Panc1 (cell line): ENCODE measurements at regions of chr14 and their contacts with region 1.

Region 1: DNA sequence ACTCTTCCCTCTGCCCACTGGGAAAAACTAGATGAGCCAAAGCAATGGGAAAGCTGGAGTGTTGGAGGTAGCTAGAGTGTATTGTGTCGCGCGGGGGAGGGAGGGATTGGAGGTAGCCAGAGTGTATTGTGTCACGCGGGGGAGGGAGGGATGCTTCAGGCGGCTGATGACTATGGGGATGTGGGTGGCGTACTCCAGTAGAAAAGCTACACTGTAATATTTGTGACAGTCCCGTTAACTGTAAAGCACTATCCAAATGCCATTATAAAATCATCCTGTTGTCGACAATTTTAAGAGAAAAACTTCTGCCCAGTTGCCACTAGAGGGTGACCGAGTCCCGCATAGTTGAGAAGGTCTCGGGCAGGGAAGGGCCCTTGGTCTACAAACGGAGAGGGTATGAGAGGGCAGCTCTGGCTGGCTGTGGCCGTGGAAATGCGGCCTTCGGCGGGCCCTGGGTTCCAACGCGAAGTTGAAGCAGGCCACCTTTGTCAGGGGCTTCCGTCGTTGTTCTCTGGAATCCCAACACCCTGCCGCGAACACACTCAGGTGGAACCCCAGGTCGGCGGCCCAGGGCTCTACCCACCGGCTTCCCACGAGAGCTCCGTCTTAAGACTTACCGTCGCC is 15.1 kb upstream of the PLEK2 start:
- DNase-seq: peak; percentile 36
- ATAC-seq: peak; percentile 88
- H3K4me3 ChIP-seq: no peak overlapping the region
- H3K27ac ChIP-seq: peak overlapping the region; percentile 54; the same call in 1 of the 2 replicates
- H3K4me1 ChIP-seq: peaks cover 7% of the 10 kb centered on the region
- H3K27me3 ChIP-seq: no peaks in the 10 kb centered on the region
- CTCF ChIP-seq: peak; percentile 84

Region 2: DNA sequence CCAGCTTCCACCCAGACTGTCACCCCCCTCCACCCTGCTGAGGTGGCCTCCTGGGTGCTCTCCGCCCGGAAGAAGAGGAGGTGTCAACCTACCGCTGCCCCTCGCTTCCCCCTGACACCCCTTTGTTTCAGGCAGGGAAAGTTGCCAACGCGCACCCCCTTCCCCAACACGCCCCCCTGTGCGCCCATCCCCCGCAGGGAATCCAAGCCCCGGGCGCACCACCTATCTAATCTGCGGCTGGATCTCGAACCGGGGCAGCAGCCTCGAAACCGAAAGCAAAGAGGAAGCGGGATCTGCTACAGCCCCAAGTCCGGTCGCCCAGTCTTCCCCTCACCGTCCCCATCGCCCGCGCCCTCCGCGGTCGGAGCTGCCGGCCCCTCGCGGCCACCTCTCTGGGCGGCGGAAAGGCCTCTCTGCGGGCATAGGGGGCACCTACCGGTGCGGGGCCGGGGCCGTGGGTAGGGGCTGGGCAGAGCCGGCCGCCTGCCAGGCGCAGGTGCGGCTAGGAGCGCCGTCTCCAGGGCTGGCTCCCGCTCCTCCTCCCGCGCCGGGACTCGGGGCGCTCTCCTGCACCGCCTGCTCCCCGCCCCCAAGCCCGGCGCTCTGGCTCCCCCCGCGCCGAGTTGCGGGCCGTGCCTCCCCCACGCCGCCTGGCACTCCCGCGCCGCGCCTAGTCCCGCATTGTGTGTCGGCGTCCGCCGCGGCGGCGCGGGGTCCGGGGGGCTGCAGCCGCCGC is 87.7 kb after region 1 on chr14:
- CTCF ChIA-PET with region 1: interaction called, 17 read pairs
- POLR2A ChIA-PET with region 1: no interaction called
- in situ Hi-C with region 1: no loop called
- intact Hi-C with region 1: loop called (anchors 10 kb)
- DNase-seq: no peak
- ATAC-seq: peak; percentile 60
- H3K4me3 ChIP-seq: peak overlapping the region; percentile 53 to 57
- H3K27ac ChIP-seq: no peak overlapping the region
- H3K4me1 ChIP-seq: peaks cover 14% of the 10 kb centered on the region; the same call in 1 of the 2 replicates
- H3K27me3 ChIP-seq: no peaks in the 10 kb centered on the region; the same call in 1 of the 2 replicates
- CTCF ChIP-seq: no peak

Region 3: GRCh38 chr14:67526676-67527459 is 99.8 kb after region 1 on chr14:
- CTCF ChIA-PET with region 1: interaction called, 28 read pairs
- POLR2A ChIA-PET with region 1: no interaction called
- in situ Hi-C with region 1: no loop called
- intact Hi-C with region 1: no loop called
- DNase-seq: peak; percentile 32
- ATAC-seq: peak; percentile 93
- H3K4me3 ChIP-seq: no peak overlapping the region
- H3K27ac ChIP-seq: no peak overlapping the region
- H3K4me1 ChIP-seq: no peaks in the 10 kb centered on the region
- H3K27me3 ChIP-seq: peaks cover 4% of the 10 kb centered on the region; the same call in 1 of the 2 replicates
- CTCF ChIP-seq: peak; percentile 89

Region 4: GRCh38 chr14:67571272-67571850 is 144.3 kb after region 1 on chr14:
- CTCF ChIA-PET with region 1: interaction called, 22 read pairs
- POLR2A ChIA-PET with region 1: no interaction called
- in situ Hi-C with region 1: no loop called
- intact Hi-C with region 1: loop called (anchors 1 kb)
- DNase-seq: peak; percentile 30
- ATAC-seq: peak; percentile 95
- H3K4me3 ChIP-seq: no peak overlapping the region
- H3K27ac ChIP-seq: no peak overlapping the region
- H3K4me1 ChIP-seq: no peaks in the 10 kb centered on the region
- H3K27me3 ChIP-seq: no peaks in the 10 kb centered on the region
- CTCF ChIP-seq: peak; percentile 88

Region 5: DNA sequence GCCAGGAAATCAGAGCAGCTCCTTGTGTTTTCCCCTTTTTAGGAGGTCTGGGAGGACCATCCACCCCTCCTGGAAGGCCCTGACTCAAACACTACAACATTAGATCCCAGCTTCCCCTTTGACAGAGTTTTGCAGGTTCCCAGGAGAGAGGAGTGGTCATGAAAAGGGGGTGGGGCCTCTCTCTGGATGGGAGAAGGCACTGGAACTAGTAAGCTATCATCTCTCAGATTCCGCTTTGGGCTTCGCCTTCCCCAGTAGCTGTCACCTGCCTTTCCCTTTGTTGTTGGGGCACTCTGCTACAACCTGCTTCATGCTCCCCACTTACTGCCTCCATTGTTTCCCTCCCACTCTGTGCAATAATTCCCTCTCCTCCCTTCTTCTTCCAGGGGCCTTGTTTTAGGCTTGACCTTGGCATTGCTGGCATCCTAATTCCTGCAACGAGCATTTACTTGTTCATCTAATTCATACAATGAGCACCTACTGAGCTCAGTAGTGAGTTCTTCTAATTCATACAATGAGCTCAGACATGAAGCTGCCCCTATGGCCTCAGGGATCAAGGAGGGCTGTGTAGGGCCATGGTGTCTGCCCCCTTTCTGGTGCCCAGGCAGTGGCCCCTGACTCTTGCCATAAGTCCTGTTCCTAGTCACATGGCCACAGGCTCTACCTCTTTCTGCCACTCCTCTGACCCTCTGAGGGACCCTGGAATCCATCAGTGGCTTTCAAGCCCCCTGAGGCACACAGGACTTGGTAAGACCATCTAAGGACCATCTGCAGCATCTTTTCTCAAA is 1216.8 kb after region 1 on chr14:
- CTCF ChIA-PET with region 1: no interaction called
- POLR2A ChIA-PET with region 1: no interaction called
- in situ Hi-C with region 1: no loop called
- intact Hi-C with region 1: no loop called
- DNase-seq: no peak
- ATAC-seq: no peak
- H3K4me3 ChIP-seq: no peak overlapping the region
- H3K27ac ChIP-seq: no peak overlapping the region
- H3K4me1 ChIP-seq: no peaks in the 10 kb centered on the region
- H3K27me3 ChIP-seq: no peaks in the 10 kb centered on the region
- CTCF ChIP-seq: no peak